ENCODE measurements at regions of chr1 and their contacts with region 1.

Region 1: DNA sequence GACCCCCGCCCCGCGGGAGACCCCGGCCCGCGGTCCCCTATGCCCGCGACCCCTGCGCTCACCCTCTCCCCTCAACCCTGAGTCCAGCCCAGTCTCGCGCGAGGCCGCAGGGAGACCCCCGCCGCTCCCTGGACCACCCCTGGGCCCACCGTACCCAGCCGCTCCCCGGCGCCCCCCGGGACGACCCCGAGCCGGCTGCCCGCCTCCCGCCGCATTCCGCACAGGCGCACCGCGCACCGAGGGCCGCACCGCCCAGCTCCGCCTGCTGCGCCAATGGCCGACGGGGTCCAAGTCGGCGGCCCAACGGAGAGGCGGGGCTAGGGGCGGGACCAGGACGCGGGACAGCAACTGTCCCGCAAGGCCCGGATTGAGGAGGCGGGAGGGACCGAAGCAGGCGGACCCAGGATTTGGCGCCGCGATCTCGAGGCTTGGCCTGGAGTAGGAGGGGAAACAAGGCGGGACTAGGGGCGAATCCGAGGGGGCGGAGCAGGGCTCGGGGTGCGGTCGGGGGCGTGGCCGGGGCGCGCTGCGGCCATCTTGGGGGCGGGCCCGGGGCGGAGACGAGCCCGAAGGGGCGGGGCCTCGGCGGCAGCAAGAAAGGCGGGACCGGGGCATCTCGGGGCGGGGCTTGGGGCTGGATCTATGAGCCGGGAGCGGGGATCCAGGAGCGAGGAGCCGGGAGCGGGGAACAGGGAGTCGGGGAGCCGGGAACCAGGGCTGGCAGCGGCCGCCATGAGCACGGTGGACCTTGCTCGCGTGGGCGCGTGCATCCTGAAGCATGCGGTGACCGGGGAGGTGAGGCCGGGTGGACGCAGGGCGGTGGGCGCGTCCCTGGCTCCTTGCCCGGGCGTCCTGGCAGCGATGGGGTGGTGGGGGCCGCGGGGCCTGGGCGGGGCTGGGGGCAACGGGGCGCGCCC is at the start of gene PRXL2B:
- DNase-seq: peak; percentile 97
- ATAC-seq: peak; percentile 67
- H3K4me3 ChIP-seq: peak within 1 kb of the TSS; percentile 63 to 81 (median 77)
- H3K4me3 Mint-ChIP-seq: peak within 1 kb of the TSS; percentile 95
- H3K27ac ChIP-seq: peak within 1 kb of the TSS; percentile 98 to 99
- H3K27ac Mint-ChIP-seq: peak within 1 kb of the TSS; percentile 99
- H3K4me1 ChIP-seq: peaks cover 38 to 53% of the 10 kb centered on the region in 2 donors
- H3K4me1 Mint-ChIP-seq: peaks cover 43% of the 10 kb centered on the region
- H3K27me3 ChIP-seq: no peaks in the 10 kb centered on the region
- H3K27me3 Mint-ChIP-seq: no peaks in the 10 kb centered on the region
- CTCF ChIP-seq: no peak
- total RNA-seq, gene PRXL2B: 27.0 and 27.9 TPM in 2 replicates

Region 2: GRCh38 chr1:2205191-2205952 is 381.0 kb before region 1 on chr1:
- CTCF ChIA-PET with region 1: no interaction called
- POLR2A ChIA-PET with region 1: no interaction called
- intact Hi-C with region 1: loop called (anchors 2 kb)
- DNase-seq: peak; percentile 95
- ATAC-seq: peak; percentile 93
- H3K4me3 ChIP-seq: peak overlapping the region in 4 of 5 experiments; percentile 46 to 70 (median 64)
- H3K4me3 Mint-ChIP-seq: peak overlapping the region; percentile 77
- H3K27ac ChIP-seq: peak overlapping the region in 1 of 2 donors; percentile 47
- H3K27ac Mint-ChIP-seq: peak overlapping the region; percentile 72
- H3K4me1 ChIP-seq: peaks cover 32 to 44% of the 10 kb centered on the region in 2 donors
- H3K4me1 Mint-ChIP-seq: peaks cover 30% of the 10 kb centered on the region
- H3K27me3 ChIP-seq: no peaks in the 10 kb centered on the region
- H3K27me3 Mint-ChIP-seq: no peaks in the 10 kb centered on the region
- CTCF ChIP-seq: no peak

Region 3: GRCh38 chr1:2525920-2526823 is 60.2 kb before region 1 on chr1 and contains the start of gene PANK4:
- CTCF ChIA-PET with region 1: interaction called, 7 read pairs
- POLR2A ChIA-PET with region 1: interaction called, 28 read pairs
- intact Hi-C with region 1: loop called (anchors 1 kb)
- DNase-seq: peak; percentile 94
- ATAC-seq: peak; percentile 91
- H3K4me3 ChIP-seq: peak within 1 kb of the TSS; percentile 48 to 96 (median 74)
- H3K4me3 Mint-ChIP-seq: peak within 1 kb of the TSS; percentile 96
- H3K27ac ChIP-seq: peak within 1 kb of the TSS; percentile 41 to 78
- H3K27ac Mint-ChIP-seq: peak within 1 kb of the TSS; percentile 85
- H3K4me1 ChIP-seq: peaks cover 41 to 53% of the 10 kb centered on the region in 2 donors
- H3K4me1 Mint-ChIP-seq: peaks cover 43% of the 10 kb centered on the region
- H3K27me3 ChIP-seq: peaks cover 0 to 24% (median 10%) of the 10 kb centered on the region in 4 experiments
- H3K27me3 Mint-ChIP-seq: no peaks in the 10 kb centered on the region
- CTCF ChIP-seq: no peak
- total RNA-seq, gene PANK4: 80.5 and 86.3 TPM in 2 replicates

Region 4: DNA sequence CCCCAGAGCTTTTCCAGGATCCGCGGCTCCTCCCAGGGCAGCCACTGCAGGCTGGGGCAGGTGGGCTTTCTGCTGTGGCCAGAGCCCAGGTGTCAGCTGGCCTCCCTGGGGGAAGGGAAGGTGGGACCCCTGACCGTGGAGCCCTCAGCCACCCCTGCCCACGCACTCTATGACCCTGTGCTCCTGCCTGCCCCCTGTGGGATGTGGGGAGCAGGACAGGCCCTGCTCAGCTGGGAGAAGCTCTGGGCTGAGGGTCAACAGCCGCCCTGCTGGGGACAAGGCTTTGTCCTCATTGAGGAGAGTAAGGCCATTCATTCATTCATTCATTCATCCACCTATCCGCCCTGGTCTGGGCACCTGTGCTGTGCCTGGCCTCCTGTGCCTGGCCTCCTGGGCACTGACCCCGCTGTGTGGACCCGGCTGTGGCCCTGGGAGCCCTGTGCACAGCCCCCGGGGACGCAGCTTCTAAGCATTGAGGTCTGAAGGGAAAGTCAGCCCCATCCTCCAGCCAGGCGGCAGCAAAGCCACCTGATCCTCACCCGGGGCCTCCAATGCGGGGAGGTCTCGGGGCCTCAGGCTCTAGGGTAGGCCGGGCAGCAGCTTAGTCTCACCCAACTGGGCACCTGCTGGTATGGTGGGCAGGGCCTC is 24.4 kb before region 1 on chr1:
- CTCF ChIA-PET with region 1: interaction called, 47 read pairs
- POLR2A ChIA-PET with region 1: interaction called, 77 read pairs
- intact Hi-C with region 1: no loop called
- DNase-seq: peak; percentile 54
- ATAC-seq: peak; percentile 63
- H3K4me3 ChIP-seq: no peak overlapping the region
- H3K4me3 Mint-ChIP-seq: no peak overlapping the region
- H3K27ac ChIP-seq: no peak overlapping the region
- H3K27ac Mint-ChIP-seq: no peak overlapping the region
- H3K4me1 ChIP-seq: peaks cover 15 to 21% of the 10 kb centered on the region in 2 donors
- H3K4me1 Mint-ChIP-seq: peaks cover 20% of the 10 kb centered on the region
- H3K27me3 ChIP-seq: no peaks in the 10 kb centered on the region
- H3K27me3 Mint-ChIP-seq: no peaks in the 10 kb centered on the region
- CTCF ChIP-seq: peak; percentile 64

Region 5: GRCh38 chr1:2642560-2643413 is 56.4 kb after region 1 on chr1:
- CTCF ChIA-PET with region 1: interaction called, 4 read pairs
- POLR2A ChIA-PET with region 1: interaction called, 3 read pairs
- intact Hi-C with region 1: loop called (anchors 1 kb)
- DNase-seq: peak; percentile 95
- ATAC-seq: peak; percentile 77
- H3K4me3 ChIP-seq: peak overlapping the region; percentile 38 to 91 (median 83)
- H3K4me3 Mint-ChIP-seq: peak overlapping the region; percentile 91
- H3K27ac ChIP-seq: peak overlapping the region; percentile 81 to 97
- H3K27ac Mint-ChIP-seq: peak overlapping the region; percentile 86
- H3K4me1 ChIP-seq: peaks cover 13 to 17% of the 10 kb centered on the region in 2 donors
- H3K4me1 Mint-ChIP-seq: peaks cover 12% of the 10 kb centered on the region
- H3K27me3 ChIP-seq: no peaks in the 10 kb centered on the region
- H3K27me3 Mint-ChIP-seq: no peaks in the 10 kb centered on the region
- CTCF ChIP-seq: no peak

Region 6: GRCh38 chr1:3105167-3105863 is 518.9 kb after region 1 on chr1:
- CTCF ChIA-PET with region 1: no interaction called
- POLR2A ChIA-PET with region 1: no interaction called
- intact Hi-C with region 1: no loop called
- DNase-seq: no peak
- ATAC-seq: no peak
- H3K4me3 ChIP-seq: no peak overlapping the region
- H3K4me3 Mint-ChIP-seq: no peak overlapping the region
- H3K27ac ChIP-seq: no peak overlapping the region
- H3K27ac Mint-ChIP-seq: no peak overlapping the region
- H3K4me1 ChIP-seq: no peaks in the 10 kb centered on the region
- H3K4me1 Mint-ChIP-seq: no peaks in the 10 kb centered on the region
- H3K27me3 ChIP-seq: peaks cover 0 to 2% (median 0%) of the 10 kb centered on the region in 4 experiments
- H3K27me3 Mint-ChIP-seq: peaks cover 9% of the 10 kb centered on the region
- CTCF ChIP-seq: no peak